Calu3 (cell line): ENCODE measurements at regions of chr11 and their contacts with region 1.

Region 1: DNA sequence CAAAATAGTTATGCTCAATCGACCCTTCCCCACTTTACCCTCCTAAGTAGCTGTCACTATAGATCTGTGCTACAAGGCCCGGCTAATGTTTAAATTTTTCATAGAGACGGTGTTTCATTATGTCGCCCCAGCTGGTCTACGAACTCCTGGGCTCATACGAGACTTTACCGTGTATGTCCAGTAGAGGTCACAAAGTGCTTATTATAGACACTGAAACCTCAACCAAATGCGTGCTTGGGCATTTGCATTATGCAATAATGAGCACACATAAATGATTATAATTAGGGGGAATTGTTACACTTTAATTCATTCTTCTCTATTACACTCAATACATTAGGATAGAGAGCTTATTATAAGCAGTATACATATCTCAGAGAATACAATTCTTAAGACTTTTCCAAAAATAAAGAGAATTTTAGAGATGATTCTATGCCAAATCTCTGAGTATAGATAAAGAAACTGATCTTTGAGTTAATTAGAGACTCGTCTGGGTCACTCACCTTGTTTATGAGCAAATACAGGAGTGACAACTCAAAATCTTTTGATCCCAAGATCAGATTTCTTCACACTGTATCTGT is 12.5 kb upstream of the MRPL16 start:
- DNase-seq: peak; percentile 57
- H3K4me3 Mint-ChIP-seq: peak overlapping the region; percentile 1
- H3K27ac Mint-ChIP-seq: peak overlapping the region; percentile 12
- H3K4me1 Mint-ChIP-seq: peaks cover 9% of the 10 kb centered on the region
- H3K27me3 Mint-ChIP-seq: no peaks in the 10 kb centered on the region
- CTCF ChIP-seq: peak; percentile 42

Region 2: DNA sequence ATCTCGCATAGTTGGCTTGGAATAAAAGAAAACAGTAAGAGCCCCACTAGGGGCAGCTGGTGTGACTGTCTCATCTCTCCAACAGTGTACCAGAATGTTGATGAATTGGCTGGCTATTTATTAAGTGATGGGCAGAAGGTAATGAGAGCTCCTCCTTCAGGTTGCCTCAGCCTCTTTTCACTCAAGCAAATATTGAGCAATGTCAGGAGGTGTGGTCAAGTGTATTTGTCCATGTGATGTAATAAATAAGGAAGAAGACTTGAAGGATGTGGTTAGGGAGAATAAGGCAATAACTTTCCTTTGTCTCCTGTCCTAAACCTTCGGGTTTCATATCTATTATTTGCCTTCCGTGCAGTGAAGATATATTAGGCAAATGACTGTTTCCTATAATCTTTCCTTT is 43.3 kb after region 1 on chr11 and contains the start of gene TCN1:
- CTCF ChIA-PET with region 1: interaction called, 3 read pairs
- intact Hi-C with region 1: loop called (anchors 1 kb)
- DNase-seq: peak; percentile 71
- H3K4me3 Mint-ChIP-seq: peak within 1 kb of the TSS; percentile 69
- H3K27ac Mint-ChIP-seq: peak within 1 kb of the TSS; percentile 92
- H3K4me1 Mint-ChIP-seq: peaks cover 18% of the 10 kb centered on the region
- H3K27me3 Mint-ChIP-seq: no peaks in the 10 kb centered on the region
- CTCF ChIP-seq: no peak
- total RNA-seq, gene TCN1: 335 and 428 TPM in 2 replicates

Region 3: DNA sequence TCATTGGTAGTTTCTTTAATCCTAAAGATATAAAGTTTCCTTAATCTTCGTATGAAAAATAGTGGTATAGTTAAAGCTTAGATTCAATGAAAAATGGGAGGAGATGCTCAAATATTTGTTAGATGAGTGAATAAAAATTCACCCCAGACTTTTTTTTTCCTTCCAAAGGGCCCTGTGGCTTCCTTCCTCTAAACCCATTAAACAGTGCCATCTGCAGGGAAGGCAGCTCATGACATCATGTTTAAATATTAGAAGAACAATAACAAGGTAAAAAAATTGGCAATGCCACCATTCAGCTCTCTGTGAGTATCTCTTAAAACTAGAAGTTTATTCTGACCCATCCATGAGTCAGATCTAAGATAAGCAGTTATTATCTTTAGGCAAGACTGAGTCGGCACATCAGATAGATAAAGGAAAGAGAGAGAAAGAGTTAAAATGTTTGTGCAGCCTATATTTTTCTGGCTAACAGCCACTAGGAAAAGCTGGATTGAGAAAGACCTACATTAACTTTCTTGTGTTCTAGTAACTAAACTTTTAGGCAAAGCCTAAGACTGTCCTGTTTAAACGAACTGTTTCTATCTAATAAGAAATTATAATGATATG is 96.0 kb after region 1 on chr11:
- CTCF ChIA-PET with region 1: interaction called, 17 read pairs
- intact Hi-C with region 1: loop called (anchors 1 kb)
- DNase-seq: peak; percentile 59
- H3K4me3 Mint-ChIP-seq: no peak overlapping the region
- H3K27ac Mint-ChIP-seq: peak overlapping the region; percentile 23
- H3K4me1 Mint-ChIP-seq: peaks cover 24% of the 10 kb centered on the region
- H3K27me3 Mint-ChIP-seq: no peaks in the 10 kb centered on the region
- CTCF ChIP-seq: peak; percentile 59

Region 4: DNA sequence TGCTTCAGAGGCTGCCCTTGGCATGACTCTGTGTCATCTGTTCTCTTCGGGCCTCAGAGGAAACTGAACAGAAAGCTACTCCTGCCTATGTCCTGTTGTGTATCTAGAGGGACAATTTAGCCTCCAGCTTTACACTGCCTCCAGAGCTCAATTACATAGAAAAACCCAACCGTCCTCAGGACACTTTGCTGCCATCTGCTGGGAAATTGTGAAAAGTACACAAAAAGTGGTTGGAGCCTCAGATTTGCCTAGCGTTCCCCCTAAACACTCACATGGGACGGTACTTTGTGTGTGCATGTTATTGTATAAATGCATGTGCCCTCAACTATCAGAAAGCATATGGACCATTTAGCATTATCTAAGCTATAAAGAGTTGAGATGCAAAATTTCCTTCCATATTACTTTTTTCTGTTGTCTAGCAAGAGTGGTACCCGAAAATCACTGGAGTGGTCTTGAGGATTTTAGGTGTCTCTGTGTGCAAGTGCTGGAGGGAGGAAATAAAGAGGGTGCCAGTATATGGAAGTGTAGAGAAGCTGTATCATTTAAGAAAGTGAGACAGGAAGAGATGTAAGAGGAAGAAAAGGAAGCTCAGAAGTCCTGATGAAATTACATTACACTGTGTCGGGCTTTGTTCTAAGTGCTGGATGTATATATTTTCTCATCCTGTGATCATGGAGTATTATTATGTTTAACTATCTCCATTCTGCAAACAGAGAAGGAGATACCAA is 428.6 kb after region 1 on chr11:
- CTCF ChIA-PET with region 1: interaction called, 9 read pairs
- intact Hi-C with region 1: loop called (anchors 1 kb)
- DNase-seq: peak; percentile 13
- H3K4me3 Mint-ChIP-seq: no peak overlapping the region
- H3K27ac Mint-ChIP-seq: peak overlapping the region; percentile 33
- H3K4me1 Mint-ChIP-seq: peaks cover 12% of the 10 kb centered on the region
- H3K27me3 Mint-ChIP-seq: no peaks in the 10 kb centered on the region
- CTCF ChIP-seq: peak; percentile 41

Region 5: GRCh38 chr11:60345489-60345888 is 522.4 kb after region 1 on chr11:
- CTCF ChIA-PET with region 1: no interaction called
- intact Hi-C with region 1: loop called (anchors 10 kb)
- DNase-seq: peak; percentile 63
- H3K4me3 Mint-ChIP-seq: no peak overlapping the region
- H3K27ac Mint-ChIP-seq: no peak overlapping the region
- H3K4me1 Mint-ChIP-seq: no peaks in the 10 kb centered on the region
- H3K27me3 Mint-ChIP-seq: peaks cover 35% of the 10 kb centered on the region
- CTCF ChIP-seq: peak; percentile 56